Dendritic cell treated with granulocyte-macrophage colony-stimulating factor and Interleukin-4, amounts not matched to agents 40 ng/mL and 50 ng/mL, for 4 days (primary cell): ENCODE measurements at regions of chr12 and their contacts with region 1.

Region 1: GRCh38 chr12:14575585-14575984 is 7.9 kb upstream of the PLBD1 start:
- H3K4me3 Mint-ChIP-seq: no peak overlapping the region
- H3K27ac Mint-ChIP-seq: peak overlapping the region; percentile 23
- H3K4me1 Mint-ChIP-seq: peaks cover 45% of the 10 kb centered on the region
- H3K27me3 Mint-ChIP-seq: no peaks in the 10 kb centered on the region

Region 2: GRCh38 chr12:14554281-14555007 is 21.1 kb before region 1 on chr12:
- intact Hi-C with region 1: no loop called
- H3K4me3 Mint-ChIP-seq: no peak overlapping the region
- H3K27ac Mint-ChIP-seq: no peak overlapping the region
- H3K4me1 Mint-ChIP-seq: peaks cover 20% of the 10 kb centered on the region
- H3K27me3 Mint-ChIP-seq: no peaks in the 10 kb centered on the region

Region 3: DNA sequence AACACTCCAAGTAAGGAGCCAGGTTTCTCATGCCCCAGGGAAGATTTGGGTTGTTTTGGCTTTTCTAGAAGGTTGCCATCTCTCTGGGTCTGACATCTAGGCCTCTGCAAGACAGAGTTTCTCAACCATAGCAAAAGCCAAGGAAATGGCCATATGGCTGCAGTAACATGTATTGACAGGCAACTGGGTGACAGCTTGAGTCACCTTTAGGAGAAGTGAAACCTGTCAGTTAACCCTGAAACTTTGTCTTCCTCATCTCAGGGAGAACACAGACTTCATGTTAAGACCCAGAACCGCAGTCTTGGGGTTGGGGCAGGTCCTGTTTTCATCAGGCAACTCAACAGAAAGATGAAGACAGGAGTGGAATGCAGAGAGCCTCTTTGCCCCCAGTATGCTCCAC is 38.1 kb after region 1 on chr12:
- intact Hi-C with region 1: loop called (anchors 2 kb)
- H3K4me3 Mint-ChIP-seq: no peak overlapping the region
- H3K27ac Mint-ChIP-seq: peak overlapping the region; percentile 85
- H3K4me1 Mint-ChIP-seq: peaks cover 35% of the 10 kb centered on the region
- H3K27me3 Mint-ChIP-seq: no peaks in the 10 kb centered on the region

Region 4: DNA sequence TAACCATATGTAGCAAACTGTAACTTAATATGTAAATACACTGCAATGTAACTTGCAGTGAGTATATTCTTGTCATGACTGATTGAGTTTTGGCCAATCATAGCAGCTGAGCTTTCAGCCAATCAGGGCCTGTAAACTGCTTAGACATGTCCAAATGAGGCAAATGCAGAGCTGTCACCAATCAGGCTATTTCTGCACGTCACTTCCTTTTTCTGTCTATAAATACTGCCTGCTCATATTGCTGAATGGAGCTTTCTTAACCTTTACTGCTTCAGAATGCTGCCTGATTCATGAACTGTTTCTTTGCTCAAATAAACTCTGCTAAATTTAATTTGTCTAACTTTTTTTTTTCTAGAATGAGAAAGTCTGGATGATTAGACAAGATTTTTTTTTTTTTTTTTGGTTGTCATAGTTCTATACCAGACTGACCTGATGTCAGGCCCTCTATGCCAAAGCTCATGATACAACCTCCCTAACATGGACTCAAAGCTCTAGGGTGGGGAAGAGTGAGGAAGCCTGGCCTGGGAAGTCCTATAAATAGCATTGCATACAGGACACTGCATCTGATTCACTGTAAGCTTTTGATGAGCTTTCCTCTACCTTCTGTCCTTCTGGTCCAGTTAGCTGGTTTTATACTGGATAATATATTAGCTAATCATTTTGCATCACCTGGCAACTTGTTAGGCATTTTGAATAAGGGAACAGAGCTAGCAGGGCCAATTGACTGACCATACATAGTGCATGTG is 298.0 kb after region 1 on chr12:
- intact Hi-C with region 1: no loop called
- H3K4me3 Mint-ChIP-seq: no peak overlapping the region
- H3K27ac Mint-ChIP-seq: no peak overlapping the region
- H3K4me1 Mint-ChIP-seq: no peaks in the 10 kb centered on the region
- H3K27me3 Mint-ChIP-seq: no peaks in the 10 kb centered on the region